ENCODE measurements at regions of chr17 and their contacts with region 1.

Region 1: DNA sequence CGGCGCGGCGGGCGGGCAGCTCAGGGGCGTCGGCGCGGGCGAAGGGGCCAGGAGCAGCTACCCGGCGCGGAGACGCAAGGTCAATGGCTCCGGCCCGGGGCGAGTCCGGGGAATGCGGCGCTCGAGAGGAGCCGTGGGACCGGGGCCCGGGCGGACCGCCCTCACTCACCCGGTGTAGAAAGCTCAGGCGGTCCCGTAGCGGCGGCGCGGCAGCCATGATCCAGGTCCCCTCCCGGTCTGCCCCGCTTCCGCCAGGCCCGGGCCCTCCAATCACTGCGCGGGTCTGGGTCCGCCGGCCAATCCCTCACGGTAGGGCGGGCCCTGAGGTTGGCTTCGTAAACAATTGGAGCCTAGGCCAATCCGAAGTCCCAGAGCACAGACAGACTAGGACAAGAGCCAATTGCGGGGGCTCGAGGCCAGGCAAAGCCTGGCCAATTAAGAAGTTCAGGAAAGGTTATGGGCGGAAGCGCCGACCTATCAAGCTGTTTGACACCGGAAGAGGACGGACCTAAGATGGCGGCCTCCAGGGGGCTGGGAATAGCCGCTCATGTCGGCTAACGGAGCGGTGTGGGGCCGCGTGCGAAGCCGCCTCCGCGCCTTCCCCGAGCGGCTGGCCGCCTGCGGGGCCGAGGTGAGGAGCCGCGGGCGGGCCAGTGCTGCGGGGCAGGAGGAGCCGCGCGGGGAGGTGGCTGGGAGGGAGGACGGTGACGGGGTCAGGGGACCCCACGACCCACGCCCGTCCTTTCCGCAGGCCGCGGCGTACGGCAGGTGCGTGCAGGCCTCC is at the starts of genes NDUFAF8 and TEPSIN:
- DNase-seq: peak; percentile 97
- H3K4me3 Mint-ChIP-seq: peak within 1 kb of the TSS; percentile 93
- H3K27ac Mint-ChIP-seq: peak within 1 kb of the TSS; percentile 91
- H3K4me1 Mint-ChIP-seq: peaks cover 41% of the 10 kb centered on the region
- H3K27me3 Mint-ChIP-seq: no peaks in the 10 kb centered on the region
- total RNA-seq, gene NDUFAF8: 27.8 to 33.5 TPM
- total RNA-seq, gene TEPSIN: 55.0 to 55.4 TPM

Region 2: DNA sequence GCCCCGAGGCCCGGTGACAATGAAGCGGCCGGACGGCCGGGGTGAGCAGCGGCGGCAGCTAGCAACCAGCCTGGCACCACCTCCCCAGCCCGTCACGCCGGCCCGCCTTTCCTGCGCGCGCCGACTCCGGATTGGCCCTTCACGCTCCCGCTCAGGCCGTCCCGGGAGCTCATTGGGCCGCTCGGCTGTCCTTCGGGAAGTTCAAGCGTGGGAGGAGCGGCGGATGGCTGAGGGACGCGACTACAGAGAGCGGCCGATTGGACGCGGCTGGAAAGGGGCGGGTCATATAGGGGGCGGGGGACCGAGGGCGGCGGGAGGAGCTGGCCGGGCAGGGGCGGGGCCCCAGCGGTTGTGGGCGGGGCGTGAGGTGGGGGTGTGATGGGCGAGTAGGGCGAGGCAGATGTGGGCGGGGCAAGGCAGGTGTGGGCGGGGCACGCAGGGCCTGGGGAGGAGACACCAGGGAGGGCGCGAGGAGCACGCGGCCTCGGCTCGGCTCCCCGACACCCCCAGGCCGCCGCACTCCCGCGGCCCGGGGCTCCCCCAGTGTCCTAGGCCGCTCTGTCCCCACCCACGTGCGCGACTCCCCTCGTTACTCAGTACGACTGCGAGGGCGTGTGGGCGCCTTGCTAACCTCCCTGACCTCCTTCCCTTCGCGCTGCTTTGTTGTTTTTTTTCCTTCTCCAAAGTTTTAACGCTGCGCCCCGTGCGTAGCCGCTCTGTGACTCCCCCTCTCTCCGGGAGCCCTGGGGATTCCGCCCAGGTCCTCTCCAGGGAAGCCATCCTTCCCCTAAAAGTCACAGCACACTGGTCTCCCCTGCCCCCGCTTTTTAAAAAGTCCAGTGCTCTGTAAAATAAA is 15.9 kb before region 1 on chr17 and contains the start of gene CEP131:
- CTCF ChIA-PET with region 1: interaction called, 4 read pairs
- POLR2A ChIA-PET with region 1: interaction called, 18 read pairs
- DNase-seq: peak; percentile 99
- H3K4me3 Mint-ChIP-seq: peak within 1 kb of the TSS; percentile 77
- H3K27ac Mint-ChIP-seq: peak within 1 kb of the TSS; percentile 61
- H3K4me1 Mint-ChIP-seq: peaks cover 23% of the 10 kb centered on the region
- H3K27me3 Mint-ChIP-seq: peaks cover 3% of the 10 kb centered on the region
- total RNA-seq, gene CEP131: 10.1 to 11.6 TPM

Region 3: DNA sequence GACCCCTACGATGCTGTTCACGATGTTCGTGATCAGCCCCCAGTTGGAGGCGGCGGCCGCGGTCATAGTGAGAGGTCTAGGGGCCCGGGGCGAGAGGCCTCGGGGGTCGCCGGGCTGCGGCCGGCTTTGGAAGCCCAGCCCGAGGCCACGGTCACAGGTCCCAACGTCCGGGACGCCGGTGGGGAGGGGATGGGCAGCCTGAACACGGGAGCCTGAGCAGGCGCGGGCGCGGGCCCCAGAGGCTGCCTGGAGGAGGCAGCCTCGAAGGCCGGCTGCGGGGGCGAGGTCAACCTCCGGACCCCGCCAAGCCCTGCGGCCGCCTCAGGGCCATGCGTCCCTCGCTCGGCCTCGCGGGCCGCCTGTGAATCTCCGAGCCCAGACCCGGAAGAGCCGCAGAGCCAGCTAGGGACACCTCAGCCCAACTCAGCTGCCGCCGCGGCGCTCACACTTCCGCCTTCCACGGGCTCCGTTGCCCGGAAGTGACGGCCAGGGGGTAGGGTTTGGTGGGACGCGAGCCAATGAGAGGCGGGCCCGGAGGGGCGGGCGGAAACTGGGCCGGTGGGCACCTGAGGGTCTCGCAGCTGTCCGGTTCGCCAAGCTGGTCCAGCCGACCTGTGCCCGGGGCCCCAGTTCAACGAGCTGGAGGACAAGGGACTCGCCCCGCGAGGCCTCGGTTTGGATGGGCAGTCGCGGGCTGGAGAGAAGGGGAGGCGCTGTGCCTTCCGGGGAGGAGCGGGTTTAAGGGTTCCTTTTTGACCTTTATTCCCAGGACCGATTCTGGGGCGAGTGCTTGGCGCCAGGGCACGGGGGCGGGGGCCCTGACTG is 56.1 kb after region 1 on chr17 and contains the start of gene SLC38A10:
- CTCF ChIA-PET with region 1: interaction called, 3 read pairs
- POLR2A ChIA-PET with region 1: interaction called, 10 read pairs
- DNase-seq: peak; percentile 95
- H3K4me3 Mint-ChIP-seq: peak within 1 kb of the TSS; percentile 91
- H3K27ac Mint-ChIP-seq: peak within 1 kb of the TSS; percentile 94
- H3K4me1 Mint-ChIP-seq: peaks cover 47% of the 10 kb centered on the region
- H3K27me3 Mint-ChIP-seq: no peaks in the 10 kb centered on the region
- total RNA-seq, gene SLC38A10: 112 to 114 TPM